H1 (cell line): ENCODE measurements at regions of chr2 and their contacts with region 1.

Region 1: GRCh38 chr2:96138179-96139145 is at the start of gene ASTL:
- DNase-seq: peak; percentile 85 to 88
- H3K4me3 ChIP-seq: peak within 1 kb of the TSS in 1 of 4 experiments; percentile 39; a peak in 2 of 8 replicates
- H3K27ac ChIP-seq: no peak within 1 kb of the TSS
- H3K4me1 ChIP-seq: peaks cover 0 to 13% (median 6%) of the 10 kb centered on the region in 4 experiments; a peak in 5 of 7 replicates
- H3K27me3 ChIP-seq: no peaks in the 10 kb centered on the region
- CTCF ChIP-seq: peak in 2 of 3 experiments; percentile 76 to 90; a peak in 3 of 4 replicates
- EP300 ChIP-seq: peak in 1 of 2 experiments; percentile 37; a peak in 1 of 3 replicates
- POLR2A ChIP-seq: no peak; a peak in 1 of 3 replicates
- RAD21 ChIP-seq: peak; percentile 87 to 90
- total RNA-seq, gene ASTL: 0.60 and 0.75 TPM in 2 replicates

Region 2: GRCh38 chr2:96074156-96074555 is 64.3 kb before region 1 on chr2:
- CTCF ChIA-PET with region 1: no interaction called
- POLR2A ChIA-PET with region 1: no interaction called
- DNase-seq: no peak
- H3K4me3 ChIP-seq: no peak overlapping the region
- H3K27ac ChIP-seq: no peak overlapping the region
- H3K4me1 ChIP-seq: no peaks in the 10 kb centered on the region
- H3K27me3 ChIP-seq: no peaks in the 10 kb centered on the region
- CTCF ChIP-seq: no peak
- EP300 ChIP-seq: no peak
- POLR2A ChIP-seq: no peak
- RAD21 ChIP-seq: no peak

Region 3: GRCh38 chr2:96116879-96117697 is 21.4 kb before region 1 on chr2:
- CTCF ChIA-PET with region 1: interaction called, 25 read pairs
- POLR2A ChIA-PET with region 1: no interaction called
- DNase-seq: no peak
- H3K4me3 ChIP-seq: peak overlapping the region; percentile 57 to 81 (median 60)
- H3K27ac ChIP-seq: no peak overlapping the region; the same call in 1 of the 2 replicates
- H3K4me1 ChIP-seq: peaks cover 0 to 20% (median 12%) of the 10 kb centered on the region in 4 experiments; a peak in 6 of 7 replicates
- H3K27me3 ChIP-seq: peaks cover 0 to 32% (median 25%) of the 10 kb centered on the region in 4 experiments; a peak in 5 of 7 replicates
- CTCF ChIP-seq: peak in 2 of 3 experiments; percentile 81 to 95; a peak in 3 of 4 replicates
- EP300 ChIP-seq: no peak
- POLR2A ChIP-seq: no peak
- RAD21 ChIP-seq: peak; percentile 57 to 86

Region 4: DNA sequence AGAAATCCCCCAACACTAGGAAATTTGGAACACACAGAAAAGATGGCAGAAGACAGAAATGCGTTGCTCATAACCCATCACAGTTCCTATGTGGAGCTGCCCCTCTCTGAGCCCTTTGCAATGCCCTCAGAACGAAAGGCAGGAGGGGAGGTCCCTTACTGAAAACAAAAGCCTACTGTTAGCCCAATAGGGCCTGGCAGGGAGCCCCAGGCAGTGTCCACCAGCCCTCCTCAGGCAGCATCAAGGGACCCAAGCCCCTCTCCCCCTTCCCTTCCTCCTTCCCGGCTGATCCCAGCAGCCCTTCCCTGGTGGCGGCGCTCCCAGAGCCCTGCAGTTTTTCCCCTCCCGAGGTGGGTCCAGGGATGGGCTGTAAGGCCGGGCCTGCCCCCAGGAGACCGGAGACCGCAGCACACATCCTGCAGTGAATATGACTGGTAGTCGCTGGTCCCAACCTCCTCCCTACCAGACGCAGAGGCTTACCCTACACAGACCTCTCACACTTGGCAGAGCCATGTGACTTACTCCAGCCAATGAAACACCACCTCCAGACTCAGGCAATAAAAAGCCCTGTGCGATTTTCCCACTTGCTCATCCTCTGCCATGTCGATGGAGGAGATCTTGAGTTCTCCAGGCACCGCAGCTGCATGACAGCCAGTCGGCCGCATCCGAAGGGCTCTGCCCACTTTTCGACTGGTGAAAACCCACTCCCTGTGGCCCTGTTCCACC is 26.2 kb after region 1 on chr2:
- CTCF ChIA-PET with region 1: interaction called, 10 read pairs
- POLR2A ChIA-PET with region 1: no interaction called
- DNase-seq: no peak
- H3K4me3 ChIP-seq: no peak overlapping the region
- H3K27ac ChIP-seq: no peak overlapping the region
- H3K4me1 ChIP-seq: peaks cover 0 to 7% (median 0%) of the 10 kb centered on the region in 4 experiments; a peak in 1 of 7 replicates
- H3K27me3 ChIP-seq: no peaks in the 10 kb centered on the region
- CTCF ChIP-seq: no peak; a peak in 1 of 4 replicates
- EP300 ChIP-seq: no peak
- POLR2A ChIP-seq: no peak
- RAD21 ChIP-seq: no peak; a peak in 1 of 4 replicates

Region 5: GRCh38 chr2:96180521-96180920 is 42.1 kb after region 1 on chr2:
- CTCF ChIA-PET with region 1: interaction called, 155 read pairs
- POLR2A ChIA-PET with region 1: interaction called, 11 read pairs
- DNase-seq: no peak
- H3K4me3 ChIP-seq: no peak overlapping the region
- H3K27ac ChIP-seq: no peak overlapping the region
- H3K4me1 ChIP-seq: no peaks in the 10 kb centered on the region
- H3K27me3 ChIP-seq: no peaks in the 10 kb centered on the region
- CTCF ChIP-seq: no peak
- EP300 ChIP-seq: no peak
- POLR2A ChIP-seq: no peak
- RAD21 ChIP-seq: no peak

Region 6: GRCh38 chr2:96427917-96428316 is 289.5 kb after region 1 on chr2:
- CTCF ChIA-PET with region 1: no interaction called
- POLR2A ChIA-PET with region 1: no interaction called
- DNase-seq: no peak
- H3K4me3 ChIP-seq: no peak overlapping the region
- H3K27ac ChIP-seq: no peak overlapping the region
- H3K4me1 ChIP-seq: peaks cover 0 to 2% (median 0%) of the 10 kb centered on the region in 4 experiments; a peak in 1 of 7 replicates
- H3K27me3 ChIP-seq: no peaks in the 10 kb centered on the region
- CTCF ChIP-seq: no peak
- EP300 ChIP-seq: no peak
- POLR2A ChIP-seq: no peak
- RAD21 ChIP-seq: no peak